OCI-LY7 (cell line): ENCODE measurements at regions of chr2 and their contacts with region 1.

Region 1: DNA sequence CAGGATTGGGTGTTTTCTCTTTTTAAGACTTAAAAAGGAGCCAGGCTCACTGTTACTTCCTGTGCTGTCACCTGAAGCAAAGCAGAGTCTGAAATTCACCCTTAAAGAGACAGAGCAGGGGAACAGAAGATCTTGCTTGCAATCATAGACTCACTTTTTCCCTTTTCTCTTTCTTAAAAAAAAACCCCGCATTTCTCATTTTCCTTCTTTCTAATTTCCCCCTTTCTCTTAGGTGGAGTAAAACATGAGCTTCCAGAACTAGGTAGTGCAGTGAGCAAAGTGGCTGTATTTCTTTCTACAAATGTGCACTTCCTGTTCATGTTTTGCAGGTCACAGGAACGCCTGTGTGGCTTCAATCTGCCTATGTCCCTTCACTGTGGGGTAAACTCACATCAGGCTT is 381.2 kb downstream of the LPIN1 start:
- DNase-seq: peak; percentile 72
- H3K4me3 ChIP-seq: peak overlapping the region; percentile 35
- H3K27ac ChIP-seq: peak overlapping the region; percentile 58
- H3K4me1 ChIP-seq: peaks cover 34% of the 10 kb centered on the region
- CTCF ChIP-seq: no peak

Region 2: GRCh38 chr2:12044857-12045256 is 82.8 kb before region 1 on chr2:
- CTCF ChIA-PET with region 1: interaction called, 3 read pairs
- POLR2A ChIA-PET with region 1: interaction called, 7 read pairs
- intact Hi-C with region 1: loop called (anchors 5 kb)
- DNase-seq: peak; percentile 88
- H3K4me3 ChIP-seq: peak overlapping the region; percentile 61
- H3K27ac ChIP-seq: peak overlapping the region; percentile 90
- H3K4me1 ChIP-seq: peaks cover 84% of the 10 kb centered on the region
- CTCF ChIP-seq: 0 out of 2 replicates have a peak, but pooled peaks have one; percentile 30